ENCODE measurements at regions of chr2 and their contacts with region 1.

Region 1: GRCh38 chr2:191114403-191114886 is 36.3 kb downstream of the STAT4 start:
- DNase-seq: peak in 8 of 9 donors; percentile 30 to 70 (median 42)
- ATAC-seq: peak; percentile 70
- H3K4me3 ChIP-seq: no peak overlapping the region
- H3K4me3 Mint-ChIP-seq: peak overlapping the region; percentile 56 to 83 (median 65)
- H3K27ac ChIP-seq: peak overlapping the region; percentile 26
- H3K27ac Mint-ChIP-seq: peak overlapping the region; percentile 67 to 95 (median 88)
- H3K4me1 ChIP-seq: peaks cover 22 to 53% of the 10 kb centered on the region in 2 donors
- H3K4me1 Mint-ChIP-seq: peaks cover 39 to 90% (median 80%) of the 10 kb centered on the region in 7 donors
- H3K27me3 ChIP-seq: no peaks in the 10 kb centered on the region
- H3K27me3 Mint-ChIP-seq: no peaks in the 10 kb centered on the region

Region 2: DNA sequence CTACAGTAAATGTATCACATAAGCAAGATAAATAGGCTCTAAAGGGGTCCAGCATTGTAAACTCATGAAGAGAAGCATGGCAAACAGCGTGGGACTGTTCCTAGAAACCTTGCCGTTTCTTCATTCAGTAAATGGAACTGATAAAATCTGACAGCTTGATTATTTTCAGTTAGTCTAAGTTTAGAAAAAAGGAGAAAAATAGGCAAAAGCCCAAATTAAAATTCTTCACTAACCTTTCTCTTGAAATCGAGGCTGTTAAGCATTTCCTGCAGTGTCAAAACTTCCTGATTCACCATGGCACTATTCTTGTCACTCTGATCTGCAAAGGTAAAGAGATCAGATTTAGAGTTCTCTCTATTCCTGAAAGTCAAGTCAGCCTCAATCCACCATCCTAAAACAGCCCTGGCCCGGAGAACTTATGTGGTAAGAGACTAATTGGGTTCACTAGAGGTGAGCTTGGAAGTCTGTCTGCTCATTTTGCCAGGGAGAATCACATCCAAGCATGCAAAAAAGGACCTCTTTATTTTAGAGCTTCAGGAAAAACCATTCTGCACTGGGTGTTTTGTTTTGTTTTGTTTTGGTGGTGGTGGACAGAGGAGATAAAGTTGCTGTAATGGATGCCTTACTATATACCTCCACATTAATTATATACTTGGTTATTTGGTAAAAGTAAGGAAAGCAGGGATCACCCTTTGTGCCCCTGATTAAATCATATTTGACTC is 48.1 kb before region 1 on chr2:
- CTCF ChIA-PET with region 1: interaction called, 3 read pairs
- POLR2A ChIA-PET with region 1: interaction called, 4 read pairs
- intact Hi-C with region 1: loop called (anchors 1 to 2 kb)
- DNase-seq: peak in 2 of 9 donors; percentile 20 to 26
- ATAC-seq: peak; percentile 46
- H3K4me3 ChIP-seq: no peak overlapping the region
- H3K4me3 Mint-ChIP-seq: peak overlapping the region; percentile 42 to 87 (median 67)
- H3K27ac ChIP-seq: peak overlapping the region; percentile 60
- H3K27ac Mint-ChIP-seq: peak overlapping the region; percentile 51 to 95 (median 89)
- H3K4me1 ChIP-seq: peaks cover 53 to 67% of the 10 kb centered on the region in 2 donors
- H3K4me1 Mint-ChIP-seq: peaks cover 51 to 93% (median 88%) of the 10 kb centered on the region in 7 donors
- H3K27me3 ChIP-seq: no peaks in the 10 kb centered on the region
- H3K27me3 Mint-ChIP-seq: no peaks in the 10 kb centered on the region

Region 3: DNA sequence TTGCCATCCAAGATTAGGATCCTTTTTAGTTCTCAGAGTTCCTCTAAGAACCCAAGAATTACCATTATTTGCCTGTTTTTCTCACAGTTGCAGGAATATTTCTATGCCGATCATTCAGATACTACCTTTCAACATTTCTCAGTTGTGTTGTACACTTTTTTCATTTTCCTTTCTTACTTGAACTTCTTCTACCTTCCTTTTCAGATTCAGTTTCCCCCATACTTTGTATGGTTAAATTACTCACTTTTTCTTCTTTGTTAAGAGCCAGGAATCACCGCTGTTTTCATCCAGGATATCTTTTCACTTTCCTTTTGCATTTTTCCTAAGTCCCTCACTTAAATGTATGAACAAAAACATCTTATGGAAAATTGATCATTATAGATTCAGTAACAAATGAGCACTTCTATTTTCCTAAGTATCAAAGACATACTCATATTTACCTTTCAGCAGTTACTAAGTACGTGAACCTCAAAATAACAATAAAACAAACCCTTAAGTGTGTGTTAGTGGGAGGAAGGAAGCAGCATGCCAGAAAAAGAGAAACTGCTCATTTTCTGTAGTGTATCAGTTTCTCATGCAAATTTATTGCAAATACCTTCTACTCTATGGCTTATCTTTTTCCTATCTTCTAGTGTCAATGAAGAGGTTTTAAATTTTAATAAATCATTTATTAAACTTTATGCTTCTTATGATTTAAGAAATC is 36.1 kb before region 1 on chr2:
- CTCF ChIA-PET with region 1: no interaction called
- POLR2A ChIA-PET with region 1: no interaction called
- intact Hi-C with region 1: loop called in 1 of 2 experiments (anchors 2 kb)
- DNase-seq: no peak
- ATAC-seq: no peak
- H3K4me3 ChIP-seq: no peak overlapping the region
- H3K4me3 Mint-ChIP-seq: peak overlapping the region in 8 of 10 donors; percentile 2 to 78 (median 26)
- H3K27ac ChIP-seq: peak overlapping the region; percentile 31
- H3K27ac Mint-ChIP-seq: peak overlapping the region; percentile 33 to 91 (median 76)
- H3K4me1 ChIP-seq: peaks cover 0 to 7% of the 10 kb centered on the region in 2 donors
- H3K4me1 Mint-ChIP-seq: peaks cover 17 to 57% (median 39%) of the 10 kb centered on the region in 7 donors
- H3K27me3 ChIP-seq: no peaks in the 10 kb centered on the region
- H3K27me3 Mint-ChIP-seq: no peaks in the 10 kb centered on the region

Region 4: DNA sequence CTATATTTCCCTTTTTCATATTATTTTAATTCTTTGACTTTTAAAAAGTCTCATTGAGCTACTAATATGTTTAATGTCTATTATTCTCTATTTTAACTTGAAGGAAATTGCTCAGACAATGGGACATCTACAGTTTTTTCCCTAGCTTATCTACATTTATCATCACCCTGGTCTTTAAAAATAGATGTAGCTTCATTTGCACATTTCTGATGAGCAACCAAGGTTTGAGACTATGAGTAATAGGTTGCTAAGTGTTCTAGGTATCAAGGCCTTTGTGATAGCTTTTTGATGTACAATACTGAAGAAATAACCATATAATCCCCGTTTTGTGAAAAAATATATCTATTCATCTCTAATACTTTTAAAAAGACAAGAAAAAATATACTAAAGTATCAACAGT is 10.7 kb before region 1 on chr2:
- CTCF ChIA-PET with region 1: no interaction called
- POLR2A ChIA-PET with region 1: no interaction called
- intact Hi-C with region 1: loop called in 1 of 2 experiments (anchors 1 kb)
- DNase-seq: no peak
- ATAC-seq: no peak
- H3K4me3 ChIP-seq: no peak overlapping the region
- H3K4me3 Mint-ChIP-seq: no peak overlapping the region
- H3K27ac ChIP-seq: no peak overlapping the region
- H3K27ac Mint-ChIP-seq: peak overlapping the region in 1 of 9 donors; percentile 2
- H3K4me1 ChIP-seq: peaks cover 0 to 8% of the 10 kb centered on the region in 2 donors
- H3K4me1 Mint-ChIP-seq: peaks cover 10 to 52% (median 34%) of the 10 kb centered on the region in 7 donors
- H3K27me3 ChIP-seq: no peaks in the 10 kb centered on the region
- H3K27me3 Mint-ChIP-seq: no peaks in the 10 kb centered on the region

Region 5: GRCh38 chr2:191128172-191128910 is 13.9 kb after region 1 on chr2:
- CTCF ChIA-PET with region 1: no interaction called
- POLR2A ChIA-PET with region 1: interaction called, 4 read pairs
- intact Hi-C with region 1: loop called (anchors 1 to 2 kb)
- DNase-seq: no peak
- ATAC-seq: peak; percentile 79
- H3K4me3 ChIP-seq: no peak overlapping the region
- H3K4me3 Mint-ChIP-seq: peak overlapping the region in 8 of 10 donors; percentile 7 to 58 (median 44)
- H3K27ac ChIP-seq: peak overlapping the region; percentile 58
- H3K27ac Mint-ChIP-seq: peak overlapping the region; percentile 18 to 86 (median 76)
- H3K4me1 ChIP-seq: peaks cover 12 to 35% of the 10 kb centered on the region in 2 donors
- H3K4me1 Mint-ChIP-seq: peaks cover 29 to 79% (median 65%) of the 10 kb centered on the region in 7 donors
- H3K27me3 ChIP-seq: no peaks in the 10 kb centered on the region
- H3K27me3 Mint-ChIP-seq: no peaks in the 10 kb centered on the region

Region 6: DNA sequence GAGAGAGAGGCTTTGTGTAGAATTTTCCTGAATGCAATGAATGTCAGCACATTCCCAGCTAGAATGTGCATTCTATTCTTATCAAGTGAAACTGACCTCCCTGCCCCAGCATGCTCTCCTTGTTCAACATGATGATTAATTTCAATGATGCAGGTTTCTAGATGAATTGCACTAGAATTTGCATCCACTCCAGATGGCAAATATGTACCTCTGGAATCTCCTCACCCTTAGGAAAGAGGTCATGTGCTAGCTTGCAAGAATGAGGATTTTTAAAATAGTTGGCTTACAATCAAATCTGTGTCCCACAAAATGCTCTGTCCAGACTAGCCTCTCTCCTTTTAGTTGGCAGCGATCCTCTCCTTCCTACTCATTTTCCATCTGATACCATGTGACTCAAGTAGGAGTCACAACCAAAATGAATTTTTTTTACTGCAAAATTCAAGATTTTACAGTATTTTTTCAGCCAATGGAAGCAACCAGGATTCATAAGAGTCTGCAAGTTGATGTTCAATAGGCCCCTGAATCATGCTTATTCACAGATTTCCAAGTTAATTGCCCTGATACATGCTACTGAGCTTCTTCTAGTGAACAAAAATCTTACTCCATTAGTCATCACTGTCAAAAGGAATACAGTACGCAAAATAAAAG is 57.4 kb after region 1 on chr2:
- CTCF ChIA-PET with region 1: no interaction called
- POLR2A ChIA-PET with region 1: no interaction called
- intact Hi-C with region 1: no loop called
- DNase-seq: no peak
- ATAC-seq: no peak
- H3K4me3 ChIP-seq: no peak overlapping the region
- H3K4me3 Mint-ChIP-seq: no peak overlapping the region
- H3K27ac ChIP-seq: no peak overlapping the region
- H3K27ac Mint-ChIP-seq: no peak overlapping the region
- H3K4me1 ChIP-seq: no peaks in the 10 kb centered on the region
- H3K4me1 Mint-ChIP-seq: peaks cover 0 to 52% (median 38%) of the 10 kb centered on the region in 7 donors
- H3K27me3 ChIP-seq: no peaks in the 10 kb centered on the region
- H3K27me3 Mint-ChIP-seq: peaks cover 0 to 4% (median 0%) of the 10 kb centered on the region in 5 donors

Region 7: GRCh38 chr2:191740016-191740419 is 625.6 kb after region 1 on chr2:
- CTCF ChIA-PET with region 1: no interaction called
- POLR2A ChIA-PET with region 1: no interaction called
- intact Hi-C with region 1: no loop called
- DNase-seq: peak in 8 of 9 donors; percentile 42 to 83 (median 78)
- ATAC-seq: peak; percentile 95
- H3K4me3 ChIP-seq: no peak overlapping the region
- H3K4me3 Mint-ChIP-seq: peak overlapping the region; percentile 0 to 62 (median 21)
- H3K27ac ChIP-seq: no peak overlapping the region
- H3K27ac Mint-ChIP-seq: peak overlapping the region; percentile 0 to 89 (median 44)
- H3K4me1 ChIP-seq: peaks cover 14% of the 10 kb centered on the region in 2 donors
- H3K4me1 Mint-ChIP-seq: peaks cover 13 to 18% (median 13%) of the 10 kb centered on the region in 7 donors
- H3K27me3 ChIP-seq: no peaks in the 10 kb centered on the region
- H3K27me3 Mint-ChIP-seq: peaks cover 10 to 45% (median 21%) of the 10 kb centered on the region in 5 donors